ENCODE measurements at regions of chr1 and their contacts with region 1.

Region 1: DNA sequence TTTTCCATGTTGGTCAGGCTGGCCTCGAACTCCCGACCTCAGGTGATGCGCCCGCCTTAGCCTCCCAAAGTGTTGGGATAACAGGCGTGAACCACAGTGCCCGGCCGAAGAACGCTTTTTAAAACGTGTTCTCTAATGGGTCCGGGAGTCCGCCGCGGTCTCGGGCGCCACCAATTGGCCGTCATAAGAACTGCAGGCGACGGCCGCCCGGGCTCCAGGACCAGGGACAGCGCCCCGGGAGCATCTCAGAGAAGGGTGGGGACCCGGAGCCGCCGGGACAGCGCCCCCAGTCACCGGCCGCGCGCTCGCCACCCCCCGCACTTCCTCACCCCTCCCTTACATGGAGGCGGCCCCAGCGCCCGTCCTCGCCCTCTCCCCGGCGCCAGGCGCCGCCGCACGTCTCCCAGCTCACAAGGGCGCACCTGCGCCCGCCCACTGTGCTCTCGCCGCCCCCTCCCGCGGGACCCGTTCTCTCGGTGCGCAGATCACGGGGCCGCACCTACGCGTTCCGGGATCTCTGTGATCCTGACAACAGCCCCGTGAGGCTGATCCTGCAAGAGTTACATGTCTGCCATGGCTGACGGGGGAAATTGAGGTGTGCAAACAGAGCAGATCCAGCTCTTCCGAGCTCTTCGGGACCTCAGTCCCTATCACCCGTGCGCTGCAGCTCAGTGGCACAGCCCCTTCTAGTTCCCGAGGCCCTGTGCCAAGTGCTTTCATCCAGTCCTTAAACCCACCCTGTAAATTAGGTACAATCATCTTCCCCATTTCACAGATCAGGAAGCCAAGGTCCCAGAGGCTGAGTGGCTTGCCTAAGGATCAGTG is 9.8 kb downstream of the RAP1GAP start:
- DNase-seq: peak; percentile 85
- ATAC-seq: peak; percentile 92
- H3K4me3 ChIP-seq: no peak overlapping the region
- H3K4me3 Mint-ChIP-seq: peak overlapping the region; percentile 39
- H3K27ac ChIP-seq: no peak overlapping the region
- H3K27ac Mint-ChIP-seq: no peak overlapping the region
- H3K4me1 ChIP-seq: peaks cover 11% of the 10 kb centered on the region in 2 donors
- H3K4me1 Mint-ChIP-seq: peaks cover 10% of the 10 kb centered on the region
- H3K27me3 ChIP-seq: peaks cover 0 to 46% (median 14%) of the 10 kb centered on the region in 4 experiments
- H3K27me3 Mint-ChIP-seq: peaks cover 37% of the 10 kb centered on the region
- CTCF ChIP-seq: peak; percentile 91

Region 2: DNA sequence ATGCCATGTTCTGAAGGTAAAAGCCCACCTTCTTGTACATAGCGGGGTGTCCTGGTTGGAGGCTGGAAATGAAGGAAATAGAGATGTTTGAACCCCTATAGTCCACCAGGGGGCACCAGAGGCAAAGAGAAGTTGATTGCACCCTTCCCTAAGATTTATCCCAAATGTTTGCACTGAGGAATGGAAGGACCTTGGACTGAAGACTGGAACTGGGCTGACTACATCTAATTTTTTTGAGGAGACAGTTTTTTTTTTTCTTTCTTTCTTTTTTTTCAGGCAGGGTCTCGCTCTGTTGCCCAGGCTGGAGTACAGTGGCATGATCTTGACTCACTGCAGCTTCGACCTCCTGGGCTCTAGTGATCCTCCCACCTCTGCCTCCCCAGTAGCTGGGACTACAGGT is 427.3 kb before region 1 on chr1:
- CTCF ChIA-PET with region 1: no interaction called
- POLR2A ChIA-PET with region 1: no interaction called
- intact Hi-C with region 1: loop called (anchors 2 kb)
- DNase-seq: peak; percentile 66
- ATAC-seq: peak; percentile 66
- H3K4me3 ChIP-seq: no peak overlapping the region
- H3K4me3 Mint-ChIP-seq: no peak overlapping the region
- H3K27ac ChIP-seq: no peak overlapping the region
- H3K27ac Mint-ChIP-seq: no peak overlapping the region
- H3K4me1 ChIP-seq: no peaks in the 10 kb centered on the region
- H3K4me1 Mint-ChIP-seq: no peaks in the 10 kb centered on the region
- H3K27me3 ChIP-seq: no peaks in the 10 kb centered on the region
- H3K27me3 Mint-ChIP-seq: no peaks in the 10 kb centered on the region
- CTCF ChIP-seq: peak; percentile 97

Region 3: DNA sequence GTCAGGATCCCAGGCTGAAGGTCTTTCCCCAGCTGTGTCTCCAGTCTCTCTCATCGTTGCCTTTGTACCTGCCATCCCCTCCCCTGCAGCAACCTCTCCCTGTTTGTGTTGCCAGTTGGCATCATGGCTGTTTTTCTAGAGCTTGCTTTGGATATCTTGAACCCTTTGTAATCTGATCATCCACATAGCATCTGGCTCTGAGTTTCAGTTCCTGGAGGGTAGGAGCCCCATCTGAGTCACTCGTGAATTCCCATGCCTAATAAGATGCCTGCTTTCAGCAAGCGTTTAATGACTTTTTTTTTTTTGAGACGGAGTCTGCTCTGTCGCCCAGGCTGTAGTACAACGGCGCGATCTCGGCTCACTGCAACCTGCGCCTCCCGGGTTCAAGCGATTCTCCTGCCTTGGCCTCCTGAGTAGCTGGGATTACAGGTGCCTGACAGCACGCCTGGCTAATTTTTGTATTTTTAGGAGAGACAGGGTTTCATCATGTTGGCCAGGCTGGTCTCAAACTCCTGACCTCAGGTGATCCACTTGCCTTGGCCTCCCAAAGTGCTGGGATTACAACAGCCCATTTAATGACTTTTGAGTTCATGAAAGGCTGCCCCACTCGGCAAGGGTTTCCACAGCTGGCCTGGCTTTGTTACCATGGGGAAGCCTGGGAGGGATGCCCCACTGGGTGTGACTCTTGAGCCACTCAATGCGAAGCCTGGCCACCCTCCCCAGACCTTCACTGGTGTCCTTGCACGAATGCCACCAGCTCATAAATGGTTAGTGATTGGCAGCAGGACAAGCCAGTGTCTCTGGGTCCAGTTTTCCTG is 138.2 kb before region 1 on chr1:
- CTCF ChIA-PET with region 1: no interaction called
- POLR2A ChIA-PET with region 1: interaction called, 10 read pairs
- intact Hi-C with region 1: no loop called
- DNase-seq: no peak
- ATAC-seq: no peak
- H3K4me3 ChIP-seq: no peak overlapping the region
- H3K4me3 Mint-ChIP-seq: peak overlapping the region; percentile 37
- H3K27ac ChIP-seq: no peak overlapping the region
- H3K27ac Mint-ChIP-seq: peak overlapping the region; percentile 61
- H3K4me1 ChIP-seq: peaks cover 69 to 94% of the 10 kb centered on the region in 2 donors
- H3K4me1 Mint-ChIP-seq: peaks cover 78% of the 10 kb centered on the region
- H3K27me3 ChIP-seq: no peaks in the 10 kb centered on the region
- H3K27me3 Mint-ChIP-seq: no peaks in the 10 kb centered on the region
- CTCF ChIP-seq: no peak

Region 4: DNA sequence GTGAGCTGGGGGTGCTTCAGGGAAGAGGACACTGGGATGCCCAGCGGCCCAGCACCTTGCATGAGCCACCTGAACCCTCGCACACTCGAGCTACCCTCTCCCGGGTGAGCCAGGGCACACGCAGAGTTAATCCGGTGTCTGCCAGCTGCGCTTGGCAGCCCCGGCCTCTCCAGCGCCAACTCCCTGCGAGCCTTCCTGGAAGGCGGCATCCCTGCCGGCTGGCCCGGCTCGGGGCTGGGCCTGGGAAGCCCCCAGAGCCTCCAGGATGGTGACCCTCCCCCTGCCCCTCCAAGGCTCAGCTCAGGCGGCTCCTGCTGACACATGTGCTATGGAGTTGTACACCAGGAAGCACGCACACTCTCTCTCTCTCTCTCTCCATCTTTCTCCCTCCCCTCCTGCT is 38.8 kb before region 1 on chr1:
- CTCF ChIA-PET with region 1: no interaction called
- POLR2A ChIA-PET with region 1: no interaction called
- intact Hi-C with region 1: no loop called
- DNase-seq: no peak
- ATAC-seq: no peak
- H3K4me3 ChIP-seq: no peak overlapping the region
- H3K4me3 Mint-ChIP-seq: no peak overlapping the region
- H3K27ac ChIP-seq: no peak overlapping the region
- H3K27ac Mint-ChIP-seq: no peak overlapping the region
- H3K4me1 ChIP-seq: peaks cover 0 to 9% of the 10 kb centered on the region in 2 donors
- H3K4me1 Mint-ChIP-seq: peaks cover 11% of the 10 kb centered on the region
- H3K27me3 ChIP-seq: peaks cover 0 to 31% (median 9%) of the 10 kb centered on the region in 4 experiments
- H3K27me3 Mint-ChIP-seq: peaks cover 33% of the 10 kb centered on the region
- CTCF ChIP-seq: no peak

Region 5: GRCh38 chr1:21680918-21681317 is 21.6 kb after region 1 on chr1:
- CTCF ChIA-PET with region 1: no interaction called
- POLR2A ChIA-PET with region 1: no interaction called
- intact Hi-C with region 1: no loop called
- DNase-seq: no peak
- ATAC-seq: no peak
- H3K4me3 ChIP-seq: no peak overlapping the region
- H3K4me3 Mint-ChIP-seq: no peak overlapping the region
- H3K27ac ChIP-seq: no peak overlapping the region
- H3K27ac Mint-ChIP-seq: no peak overlapping the region
- H3K4me1 ChIP-seq: no peaks in the 10 kb centered on the region
- H3K4me1 Mint-ChIP-seq: peaks cover 8% of the 10 kb centered on the region
- H3K27me3 ChIP-seq: no peaks in the 10 kb centered on the region
- H3K27me3 Mint-ChIP-seq: no peaks in the 10 kb centered on the region
- CTCF ChIP-seq: no peak

Region 6: DNA sequence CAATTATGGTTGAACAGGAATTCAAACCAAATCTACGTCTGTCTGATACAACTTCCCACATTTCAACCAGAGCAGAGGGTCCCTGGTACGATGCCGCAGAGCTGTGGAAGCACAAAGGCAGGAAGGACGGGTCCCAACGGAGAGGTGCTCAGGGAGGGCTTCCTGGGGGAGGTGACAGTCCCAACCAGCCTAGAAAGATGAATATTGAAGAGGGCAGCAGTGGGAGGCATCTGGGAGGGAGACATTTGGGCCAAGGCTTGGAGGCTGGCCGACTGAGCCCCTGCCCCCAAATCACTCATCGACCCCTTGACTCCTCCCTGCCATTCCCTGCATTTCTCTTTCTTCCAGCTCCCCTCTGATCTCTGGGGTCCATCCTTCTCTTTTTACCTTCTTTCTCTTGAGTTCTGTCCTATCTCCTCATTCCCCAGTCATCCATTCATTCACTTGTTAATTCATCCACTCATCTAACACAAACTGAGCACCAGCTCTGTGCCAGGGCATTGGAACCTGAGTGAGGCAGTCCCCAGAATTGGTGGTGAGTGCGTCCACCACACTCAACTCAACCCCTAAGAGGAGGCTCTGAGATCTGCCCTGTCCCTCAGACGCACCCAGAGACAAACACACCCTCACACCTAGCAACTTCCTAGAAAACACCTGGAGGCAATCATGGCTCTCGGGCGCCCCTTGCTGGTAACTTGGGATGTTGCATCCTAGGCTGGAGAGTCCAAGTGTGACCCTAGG is 304.3 kb after region 1 on chr1:
- CTCF ChIA-PET with region 1: interaction called, 5 read pairs
- POLR2A ChIA-PET with region 1: no interaction called
- intact Hi-C with region 1: loop called (anchors 5 kb)
- DNase-seq: peak; percentile 83
- ATAC-seq: peak; percentile 96
- H3K4me3 ChIP-seq: no peak overlapping the region
- H3K4me3 Mint-ChIP-seq: no peak overlapping the region
- H3K27ac ChIP-seq: no peak overlapping the region
- H3K27ac Mint-ChIP-seq: no peak overlapping the region
- H3K4me1 ChIP-seq: peaks cover 0 to 4% of the 10 kb centered on the region in 2 donors
- H3K4me1 Mint-ChIP-seq: no peaks in the 10 kb centered on the region
- H3K27me3 ChIP-seq: no peaks in the 10 kb centered on the region
- H3K27me3 Mint-ChIP-seq: peaks cover 14% of the 10 kb centered on the region
- CTCF ChIP-seq: peak; percentile 94

Measured in B cell (primary cell).